ENCODE measurements at regions of chr13 and their contacts with region 1.

Region 1: DNA sequence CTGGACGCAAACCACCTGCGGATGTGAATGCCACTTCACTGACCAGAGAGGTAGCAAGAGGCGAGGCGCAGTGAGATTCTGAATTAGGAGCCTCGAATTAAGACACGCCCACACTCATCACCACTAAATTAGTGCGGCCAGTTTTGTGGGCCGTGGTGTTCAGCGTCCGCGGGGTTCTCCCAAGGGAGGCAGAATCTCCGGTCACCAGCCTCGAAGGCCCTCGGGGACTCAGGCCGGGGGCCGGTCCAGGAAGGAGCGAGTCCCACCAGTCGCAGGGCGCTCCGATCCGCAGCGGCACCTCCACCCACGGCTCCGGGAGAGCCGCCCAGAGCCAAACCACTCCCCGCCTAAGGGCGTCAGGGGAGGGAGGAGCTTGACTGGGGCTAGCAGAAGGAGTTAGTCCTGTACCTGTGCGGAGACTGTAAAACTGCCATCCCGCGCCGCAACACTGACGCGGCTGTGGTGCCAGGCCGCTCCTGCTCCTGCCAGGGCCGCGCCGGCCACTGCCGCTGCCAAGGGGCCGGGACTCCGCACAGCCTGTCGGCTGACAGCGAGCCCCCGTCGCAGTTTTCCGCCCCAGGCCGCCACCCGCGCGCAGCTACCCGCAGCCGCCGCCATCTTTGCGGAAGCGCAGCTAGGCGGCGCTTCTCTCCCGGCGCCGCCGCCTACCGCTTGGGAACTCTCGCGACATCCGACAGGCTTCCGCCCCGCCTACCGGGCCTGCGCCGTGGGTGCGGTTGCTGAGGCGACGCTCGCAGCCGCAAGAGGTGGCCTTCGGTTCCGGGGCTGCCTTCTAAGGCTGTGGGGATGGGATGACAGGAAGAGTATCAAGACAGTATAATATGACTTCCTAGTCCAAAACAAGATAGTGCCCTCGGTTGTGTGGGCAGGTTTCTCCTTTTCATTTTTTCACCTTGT is at the start of gene MICU2:
- DNase-seq: peak; percentile 94
- H3K4me3 Mint-ChIP-seq: peak within 1 kb of the TSS; percentile 85
- H3K27ac Mint-ChIP-seq: peak within 1 kb of the TSS; percentile 88
- H3K4me1 Mint-ChIP-seq: peaks cover 24% of the 10 kb centered on the region
- H3K27me3 Mint-ChIP-seq: peaks cover 24% of the 10 kb centered on the region
- total RNA-seq, gene MICU2: 32.5 and 33.8 TPM in 2 replicates

Region 2: GRCh38 chr13:21579754-21580316 is 24.0 kb before region 1 on chr13:
- intact Hi-C with region 1: loop called (anchors 2 kb)
- DNase-seq: no peak
- H3K4me3 Mint-ChIP-seq: no peak overlapping the region
- H3K27ac Mint-ChIP-seq: no peak overlapping the region
- H3K4me1 Mint-ChIP-seq: peaks cover 36% of the 10 kb centered on the region
- H3K27me3 Mint-ChIP-seq: no peaks in the 10 kb centered on the region

Measured in activated T-helper 1 cell treated with anti-CD3 and anti-CD28 coated beads, Interleukin-12 subunit alpha, Interleukin-12 subunit beta, Interleukin-2, Interleukin-4 antibody, amounts not matched to agents 30 ng/mL and 10 ng/mL and 1 ng/mL, durations not matched to agents 14 hours and 24 hours and 36 hours (primary cell).